Heart left ventricle (tissue), 16 donors: ENCODE measurements at regions of chr10 and their contacts with region 1.

Region 1: GRCh38 chr10:110643653-110644597 is at the start of gene RBM20:
- DNase-seq: peak; percentile 71 to 82 (median 79)
- ATAC-seq: peak; percentile 57 to 91 (median 80)
- H3K4me3 ChIP-seq: peak within 1 kb of the TSS; percentile 54 to 75 (median 64)
- H3K27ac ChIP-seq: peak within 1 kb of the TSS; percentile 82 to 96 (median 92)
- H3K4me1 ChIP-seq: peaks cover 0 to 29% (median 11%) of the 10 kb centered on the region in 12 donors
- H3K27me3 ChIP-seq: peaks cover 0 to 78% (median 24%) of the 10 kb centered on the region in 9 donors
- CTCF ChIP-seq: peak in 1 of 12 donors; percentile 6
- POLR2A ChIP-seq: peak in 1 of 2 donors; percentile 84
- total RNA-seq, gene RBM20: 73.0 to 152 (median 96.9) TPM

Region 2: GRCh38 chr10:110765188-110765990 is 121.5 kb after region 1 on chr10:
- intact Hi-C with region 1: loop called in 1 of 10 experiments (anchors 10 kb)
- DNase-seq: no peak
- ATAC-seq: peak in 3 of 4 donors; percentile 14 to 38 (median 31)
- H3K4me3 ChIP-seq: peak overlapping the region in 11 of 12 donors; percentile 2 to 51 (median 44)
- H3K27ac ChIP-seq: peak overlapping the region; percentile 73 to 96 (median 80)
- H3K4me1 ChIP-seq: peaks cover 0 to 41% (median 11%) of the 10 kb centered on the region in 12 donors
- H3K27me3 ChIP-seq: no peaks in the 10 kb centered on the region
- CTCF ChIP-seq: no peak
- POLR2A ChIP-seq: no peak